ENCODE measurements at regions of chr6 and their contacts with region 1.

Region 1: GRCh38 chr6:47309291-47310130 is at the start of gene TNFRSF21:
- DNase-seq: peak; percentile 95
- H3K27ac ChIP-seq: peak within 1 kb of the TSS; percentile 84
- CTCF ChIP-seq: peak; percentile 97

Region 2: GRCh38 chr6:46949632-46950280 is 359.8 kb before region 1 on chr6:
- CTCF ChIA-PET with region 1: no interaction called
- POLR2A ChIA-PET with region 1: no interaction called
- DNase-seq: no peak
- H3K27ac ChIP-seq: no peak overlapping the region
- CTCF ChIP-seq: no peak

Region 3: GRCh38 chr6:47097092-47097945 is 212.2 kb before region 1 on chr6:
- CTCF ChIA-PET with region 1: interaction called, 46 read pairs
- POLR2A ChIA-PET with region 1: no interaction called
- DNase-seq: peak; percentile 77
- H3K27ac ChIP-seq: peak overlapping the region; percentile 17; the same call in 1 of the 2 replicates
- CTCF ChIP-seq: no peak; the same call in 1 of the 2 replicates

Region 4: GRCh38 chr6:47209632-47210031 is 99.9 kb before region 1 on chr6:
- CTCF ChIA-PET with region 1: no interaction called
- POLR2A ChIA-PET with region 1: no interaction called
- DNase-seq: no peak
- H3K27ac ChIP-seq: 0 out of 2 replicates have a peak overlapping the region, but pooled peaks have one; percentile 5
- CTCF ChIP-seq: no peak

Region 5: DNA sequence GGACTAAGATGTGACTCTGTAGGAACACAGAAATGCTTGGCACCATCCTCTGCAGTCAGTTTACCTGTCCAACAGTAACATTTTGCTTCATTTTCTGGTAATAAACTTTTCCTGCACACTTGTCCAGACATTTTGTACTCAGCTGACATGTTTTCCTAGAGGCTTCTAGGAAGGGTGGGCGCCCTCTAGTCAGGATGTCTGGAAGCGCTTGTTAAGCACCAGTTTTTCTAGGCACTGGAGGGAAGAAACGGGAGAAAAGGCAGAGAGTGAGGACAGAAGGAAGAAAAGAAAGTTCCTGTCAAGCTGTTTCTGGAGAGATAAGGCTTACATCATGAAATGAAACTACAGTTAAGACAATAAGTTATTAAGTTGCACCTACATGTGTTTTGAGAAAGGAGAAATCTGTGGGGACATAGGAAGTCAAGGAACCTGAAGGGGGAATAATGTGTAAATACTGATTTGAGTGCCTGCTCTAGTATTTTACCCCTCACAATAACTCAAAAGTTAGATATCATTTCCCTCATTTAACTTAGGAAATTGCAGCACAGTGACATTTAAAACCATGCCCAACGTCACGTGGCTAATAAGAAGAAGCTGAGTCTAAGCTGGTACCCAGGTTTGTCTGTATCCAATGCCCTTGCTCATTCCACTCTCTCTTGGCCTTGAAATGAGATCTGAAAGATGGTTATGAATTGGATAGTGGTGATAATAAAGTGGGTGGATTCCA is 42.8 kb after region 1 on chr6:
- CTCF ChIA-PET with region 1: no interaction called
- POLR2A ChIA-PET with region 1: no interaction called
- DNase-seq: no peak
- H3K27ac ChIP-seq: no peak overlapping the region
- CTCF ChIP-seq: no peak

Region 6: GRCh38 chr6:47621838-47622449 is 312.4 kb after region 1 on chr6:
- CTCF ChIA-PET with region 1: no interaction called
- POLR2A ChIA-PET with region 1: no interaction called
- DNase-seq: no peak
- H3K27ac ChIP-seq: peak overlapping the region; percentile 41
- CTCF ChIP-seq: no peak